ENCODE measurements at regions of chr17 and their contacts with region 1.

Region 1: DNA sequence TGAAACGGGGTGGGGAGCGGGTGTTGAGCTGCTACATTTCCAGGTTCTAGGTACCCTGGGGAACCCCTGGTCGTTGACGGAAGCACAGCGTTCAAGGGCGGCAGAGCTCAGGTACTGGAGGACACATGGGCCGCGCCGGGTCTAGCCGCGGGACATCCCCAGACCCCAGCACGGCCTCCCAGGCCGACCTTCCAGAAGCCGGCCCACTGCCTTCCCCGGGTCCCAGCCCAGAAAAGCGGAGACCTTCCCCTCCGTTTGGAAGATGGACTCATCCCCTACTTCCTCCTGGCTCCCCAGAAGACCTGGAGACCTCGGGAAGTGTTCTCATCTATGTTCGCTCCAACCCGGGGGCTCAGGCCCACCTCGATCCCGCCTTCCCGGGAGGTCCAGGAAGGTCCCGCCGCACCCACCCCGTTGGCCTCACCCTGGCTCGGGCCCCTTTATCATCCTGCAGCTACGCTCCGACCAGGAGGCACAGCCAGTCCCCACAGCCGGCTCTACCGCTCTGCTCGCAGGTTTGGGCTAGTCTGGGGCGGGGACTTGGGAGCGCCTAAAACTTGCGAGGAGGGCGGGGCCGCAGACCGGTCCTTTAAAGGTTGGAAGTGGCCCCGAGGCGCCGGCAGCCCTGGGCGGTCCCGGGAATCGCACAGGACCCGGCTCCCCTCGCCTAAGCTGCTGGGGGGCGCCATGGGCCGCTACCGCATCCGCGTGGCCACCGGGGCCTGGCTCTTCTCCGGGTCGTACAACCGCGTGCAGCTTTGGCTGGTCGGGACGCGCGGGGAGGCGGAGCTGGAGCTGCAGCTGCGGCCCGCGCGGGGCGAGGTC is at the start of gene ALOX12:
- DNase-seq: no peak
- H3K4me3 ChIP-seq: peak within 1 kb of the TSS; percentile 6
- CTCF ChIP-seq: no peak

Region 2: GRCh38 chr17:6913608-6914443 is 81.8 kb before region 1 on chr17:
- in situ Hi-C with region 1: loop called (anchors 10 kb)
- DNase-seq: peak; percentile 34
- H3K4me3 ChIP-seq: no peak overlapping the region
- CTCF ChIP-seq: peak; percentile 77

Region 3: GRCh38 chr17:7045909-7046724 is 50.5 kb after region 1 on chr17:
- in situ Hi-C with region 1: no loop called
- DNase-seq: peak; percentile 75
- H3K4me3 ChIP-seq: no peak overlapping the region
- CTCF ChIP-seq: peak; percentile 71